GM18951 (cell line): ENCODE measurements at regions of chr5 and their contacts with region 1.

Region 1: GRCh38 chr5:116574367-116575325 is at the start of gene SEMA6A:
- POLR2A ChIP-seq: peak; percentile 62

Region 2: GRCh38 chr5:116137544-116138378 is 436.9 kb before region 1 on chr5:
- in situ Hi-C with region 1: loop called (anchors 25 kb)
- POLR2A ChIP-seq: no peak

Region 3: DNA sequence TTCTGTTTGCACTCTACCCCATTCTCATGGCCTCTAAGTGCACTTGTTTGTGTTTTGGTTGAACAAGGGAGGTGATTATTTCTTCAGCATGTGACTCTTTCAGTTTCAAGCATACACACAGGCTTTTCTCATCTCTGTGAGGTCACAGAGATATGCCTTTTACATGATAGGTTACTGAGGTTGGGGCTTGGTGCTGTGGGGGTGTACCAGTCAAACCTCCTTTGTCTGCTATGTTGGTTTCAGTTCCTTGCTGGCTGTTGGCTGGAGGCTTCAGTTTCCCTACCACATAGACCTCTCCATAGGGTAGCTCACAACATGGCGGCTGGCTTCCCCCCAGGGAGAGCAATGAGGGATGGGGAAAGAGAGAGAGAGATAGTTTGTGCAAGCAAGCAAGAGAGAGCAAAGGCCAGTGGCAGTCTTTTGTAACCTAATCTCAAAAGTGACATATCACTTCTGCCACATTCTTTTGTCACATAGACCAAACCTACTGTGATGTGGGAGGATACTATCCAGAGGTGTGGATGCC is 96.6 kb after region 1 on chr5:
- in situ Hi-C with region 1: no loop called
- POLR2A ChIP-seq: no peak

Region 4: DNA sequence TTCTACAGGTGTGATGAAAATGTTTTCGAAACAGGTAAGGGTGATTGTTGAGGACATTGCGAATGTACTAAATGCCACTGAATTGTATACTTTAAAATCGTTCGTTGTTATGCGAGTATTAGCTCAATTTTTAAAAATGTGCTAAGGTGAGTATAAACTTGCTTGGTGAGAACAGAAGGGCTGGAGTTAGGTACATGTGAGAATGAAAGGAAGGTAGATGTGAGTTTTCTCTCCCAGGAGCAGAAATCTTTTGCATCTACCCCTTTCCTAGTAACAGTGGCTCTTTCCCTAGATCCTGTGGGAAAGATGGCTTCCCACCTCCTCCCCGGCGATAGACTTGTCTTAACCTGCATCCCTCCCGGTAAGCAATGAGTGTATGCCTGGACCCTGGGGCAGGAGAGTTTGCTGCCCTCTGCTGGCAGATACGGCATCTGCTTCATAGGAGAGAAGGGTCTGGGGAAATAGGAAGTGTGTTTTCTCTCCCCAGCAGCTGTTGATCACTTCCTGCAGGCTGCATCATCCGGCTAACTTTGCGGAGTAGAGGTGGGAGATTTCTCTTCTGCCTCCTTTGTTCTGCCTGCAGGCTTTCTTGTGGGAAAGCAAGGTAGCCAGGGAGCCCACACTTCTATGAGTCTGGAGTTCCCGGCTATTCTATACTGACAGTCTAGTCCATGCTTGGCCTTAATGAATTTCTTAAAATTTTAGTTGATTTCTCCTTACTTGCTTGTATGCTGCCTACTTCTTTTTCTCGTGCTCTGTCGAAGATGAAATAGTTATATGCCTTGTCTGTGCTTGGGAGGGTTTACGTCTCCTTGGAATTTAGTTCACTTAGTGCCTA is 373.3 kb after region 1 on chr5:
- in situ Hi-C with region 1: loop called (anchors 10 kb)
- POLR2A ChIP-seq: no peak